Left cardiac atrium (tissue), 4 donors: ENCODE measurements at regions of chr17 and their contacts with region 1.

Region 1: DNA sequence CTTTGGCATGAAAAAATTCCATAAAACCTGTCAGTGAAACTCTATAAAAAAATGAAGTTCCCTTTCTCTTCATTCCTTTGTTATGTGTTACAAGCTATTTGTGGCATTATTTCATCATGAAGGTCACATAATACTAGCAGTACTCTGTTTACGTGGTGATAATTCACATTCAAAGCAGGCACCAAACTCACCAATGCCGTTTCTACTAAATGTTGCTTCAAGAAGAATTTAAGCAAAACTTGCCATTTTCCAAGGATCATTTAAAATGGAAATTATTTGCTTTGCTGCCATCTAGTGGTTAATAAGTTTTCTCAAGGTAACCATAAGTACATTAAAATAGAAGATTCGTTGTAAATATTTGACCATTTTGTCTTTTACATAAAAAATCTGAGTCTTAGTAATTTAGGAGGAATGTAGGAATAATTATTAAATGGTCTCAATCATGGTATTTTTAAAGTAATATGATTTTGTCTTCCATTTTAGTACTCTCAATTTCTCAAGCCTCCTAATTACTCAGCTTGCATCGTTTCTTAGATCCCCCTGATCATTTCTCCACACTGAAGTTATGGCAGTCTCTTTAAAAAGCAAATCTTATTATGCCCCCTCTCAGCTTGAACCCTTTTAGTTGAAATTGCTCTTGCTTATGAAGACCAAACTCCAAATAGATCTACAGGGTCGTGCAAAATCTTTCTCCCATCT is 80.8 kb downstream of the OMG start:
- DNase-seq: no peak
- ATAC-seq: no peak

Region 2: DNA sequence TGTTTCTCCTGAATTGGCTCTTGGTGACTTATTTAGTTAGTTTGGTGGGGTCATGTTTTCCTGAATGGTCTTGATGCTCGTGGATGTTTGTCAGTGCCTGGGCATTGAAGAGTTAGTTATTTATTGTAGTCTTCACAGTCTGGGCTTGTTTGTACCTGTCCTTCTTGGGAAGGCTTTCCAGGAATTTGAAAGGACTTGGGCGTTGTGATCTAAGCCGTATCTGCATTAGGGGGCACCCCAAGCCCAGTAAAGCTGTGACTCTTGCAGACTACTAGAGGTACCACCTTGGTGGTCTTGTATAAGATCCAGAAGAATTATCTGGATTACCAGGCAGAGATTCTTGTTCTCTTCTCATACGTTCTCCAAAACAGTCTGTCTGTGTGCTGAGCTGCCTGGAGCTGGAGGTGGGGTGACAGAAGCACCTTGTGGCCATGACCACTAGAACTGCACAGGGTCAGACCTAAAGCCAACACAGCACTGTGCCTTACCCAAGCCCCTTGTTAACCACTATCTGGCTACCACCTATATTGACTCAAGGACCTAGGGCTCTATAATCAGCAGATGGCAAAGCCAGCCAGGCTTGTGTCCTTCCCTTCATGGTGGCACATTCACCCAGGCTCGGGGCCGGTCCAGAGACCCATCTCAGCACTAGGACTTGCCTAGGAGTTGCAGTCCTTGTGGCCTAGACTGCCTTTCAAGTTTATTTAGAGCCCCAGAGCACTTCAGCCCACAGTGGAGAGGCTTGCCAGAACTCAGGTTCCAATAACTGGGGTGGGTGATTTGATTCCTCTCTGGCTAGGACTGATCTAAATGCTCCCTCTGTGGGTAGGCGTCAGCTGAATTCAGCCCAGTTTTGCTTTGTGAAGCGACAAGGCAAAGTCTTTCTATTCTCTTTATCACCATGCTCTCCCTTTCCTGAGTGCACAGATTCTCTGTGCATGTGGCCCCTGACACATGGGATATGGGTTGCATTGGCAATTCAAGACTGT is 234.4 kb before region 1 on chr17:
- intact Hi-C with region 1: no loop called
- DNase-seq: no peak
- ATAC-seq: no peak

Region 3: DNA sequence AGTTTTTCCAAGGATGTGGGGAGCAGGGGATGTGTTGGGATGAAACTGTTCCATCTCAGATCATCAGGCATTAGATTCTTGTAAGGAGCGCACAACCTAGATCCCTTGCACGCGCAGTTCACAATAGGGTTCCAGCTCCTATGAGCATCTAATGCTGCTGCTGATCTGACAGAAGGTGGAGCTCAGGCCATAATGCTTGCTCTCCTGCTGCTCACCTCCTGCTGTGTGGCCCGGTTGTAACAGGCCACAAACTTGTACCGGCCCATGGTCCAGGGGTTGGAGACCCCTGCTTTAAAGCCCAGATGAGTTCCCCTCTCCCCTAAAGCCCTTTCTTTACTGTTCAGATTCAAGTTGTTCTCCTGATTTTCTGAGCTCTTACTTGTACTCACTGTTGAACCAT is 200.6 kb before region 1 on chr17:
- intact Hi-C with region 1: loop called (anchors 1 to 5 kb)
- DNase-seq: no peak
- ATAC-seq: no peak